CD4-positive, alpha-beta memory T cell (primary cell): ENCODE measurements at regions of chr1 and their contacts with region 1.

Region 1: GRCh38 chr1:98053471-98054366 is 132.9 kb upstream of the DPYD start:
- DNase-seq: peak; percentile 42 to 63 (median 50)
- H3K4me3 ChIP-seq: peak overlapping the region in 1 of 2 donors; percentile 49
- H3K4me3 Mint-ChIP-seq: peak overlapping the region; percentile 54 to 87 (median 72)
- H3K27ac ChIP-seq: no peak overlapping the region
- H3K27ac Mint-ChIP-seq: peak overlapping the region in 1 of 7 donors; percentile 71
- H3K4me1 ChIP-seq: peaks cover 22% of the 10 kb centered on the region
- H3K4me1 Mint-ChIP-seq: peaks cover 11 to 29% (median 22%) of the 10 kb centered on the region in 4 donors
- H3K27me3 ChIP-seq: peaks cover 40% of the 10 kb centered on the region
- H3K27me3 Mint-ChIP-seq: peaks cover 45 to 58% of the 10 kb centered on the region in 2 donors

Region 2: DNA sequence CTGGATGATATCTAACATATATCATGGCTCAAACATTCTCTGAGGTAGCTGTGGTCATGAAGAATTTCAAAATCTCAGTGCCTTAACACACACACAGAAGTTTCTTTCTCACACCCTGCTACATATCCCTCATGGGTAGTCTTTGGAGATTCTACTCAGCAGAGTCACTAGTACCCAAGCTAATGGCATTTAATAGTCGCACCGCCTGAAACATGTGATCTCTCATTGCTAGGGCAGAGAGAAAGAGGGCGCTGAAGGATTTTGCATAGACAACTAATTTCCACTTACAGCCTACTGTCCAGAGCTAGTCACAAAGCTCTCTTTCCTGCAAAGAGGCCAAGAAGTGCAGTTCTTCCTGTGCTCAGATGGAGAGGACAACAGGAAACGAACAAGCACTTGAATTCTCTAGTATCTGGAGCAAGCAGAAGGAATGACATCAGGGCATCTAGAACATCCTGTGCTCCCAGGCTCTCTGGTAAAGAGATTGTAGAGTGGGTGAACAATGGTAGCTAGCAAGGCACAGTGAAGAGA is 1515.5 kb before region 1 on chr1:
- CTCF ChIA-PET with region 1: no interaction called
- POLR2A ChIA-PET with region 1: no interaction called
- intact Hi-C with region 1: loop called (anchors 10 kb)
- DNase-seq: no peak
- H3K4me3 ChIP-seq: no peak overlapping the region
- H3K4me3 Mint-ChIP-seq: no peak overlapping the region
- H3K27ac ChIP-seq: no peak overlapping the region
- H3K27ac Mint-ChIP-seq: no peak overlapping the region
- H3K4me1 ChIP-seq: no peaks in the 10 kb centered on the region
- H3K4me1 Mint-ChIP-seq: no peaks in the 10 kb centered on the region
- H3K27me3 ChIP-seq: no peaks in the 10 kb centered on the region
- H3K27me3 Mint-ChIP-seq: peaks cover 0 to under 1% of the 10 kb centered on the region in 2 donors

Region 3: DNA sequence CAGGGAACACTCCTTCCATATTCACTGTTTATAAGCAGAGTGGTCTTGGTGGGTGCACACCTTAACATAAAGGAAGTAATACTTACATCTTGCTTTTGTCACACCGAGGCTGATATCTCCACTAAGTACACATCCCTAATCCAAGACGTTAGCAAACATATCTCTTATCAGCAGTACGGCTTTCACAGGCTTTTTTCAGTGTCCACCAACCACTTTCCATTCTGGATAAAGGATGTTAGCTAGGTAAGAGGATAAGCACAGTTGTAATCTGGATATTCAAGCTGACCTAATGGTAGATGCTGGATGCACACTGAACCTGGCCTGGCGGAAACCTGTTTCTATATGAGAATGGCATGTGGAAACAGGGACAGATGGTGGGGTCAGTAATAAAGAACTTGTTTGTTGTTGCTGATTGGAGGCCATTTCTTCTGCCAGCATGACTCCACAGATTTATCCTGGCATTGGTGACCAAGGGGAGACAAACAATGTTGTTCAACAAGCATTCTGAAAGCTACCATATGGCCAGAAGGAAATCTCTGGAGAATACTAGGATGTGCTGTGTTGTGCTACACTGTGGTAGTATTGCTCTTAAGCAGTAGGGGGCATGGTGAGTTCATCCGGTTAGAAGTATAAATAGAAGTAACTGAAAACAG is 915.7 kb before region 1 on chr1:
- CTCF ChIA-PET with region 1: interaction called, 10 read pairs
- POLR2A ChIA-PET with region 1: no interaction called
- intact Hi-C with region 1: loop called (anchors 1 kb)
- DNase-seq: peak in 1 of 5 donors; percentile 4
- H3K4me3 ChIP-seq: no peak overlapping the region
- H3K4me3 Mint-ChIP-seq: no peak overlapping the region
- H3K27ac ChIP-seq: no peak overlapping the region
- H3K27ac Mint-ChIP-seq: peak overlapping the region in 2 of 7 donors; percentile 16 to 34
- H3K4me1 ChIP-seq: no peaks in the 10 kb centered on the region
- H3K4me1 Mint-ChIP-seq: peaks cover 0 to 7% (median 5%) of the 10 kb centered on the region in 4 donors
- H3K27me3 ChIP-seq: no peaks in the 10 kb centered on the region
- H3K27me3 Mint-ChIP-seq: no peaks in the 10 kb centered on the region

Region 4: GRCh38 chr1:97243973-97244560 is 809.7 kb before region 1 on chr1:
- CTCF ChIA-PET with region 1: interaction called, 4 read pairs
- POLR2A ChIA-PET with region 1: no interaction called
- intact Hi-C with region 1: loop called (anchors 1 kb)
- DNase-seq: no peak
- H3K4me3 ChIP-seq: no peak overlapping the region
- H3K4me3 Mint-ChIP-seq: no peak overlapping the region
- H3K27ac ChIP-seq: no peak overlapping the region
- H3K27ac Mint-ChIP-seq: no peak overlapping the region
- H3K4me1 ChIP-seq: no peaks in the 10 kb centered on the region
- H3K4me1 Mint-ChIP-seq: peaks cover 0 to 2% (median 0%) of the 10 kb centered on the region in 4 donors
- H3K27me3 ChIP-seq: no peaks in the 10 kb centered on the region
- H3K27me3 Mint-ChIP-seq: no peaks in the 10 kb centered on the region

Region 5: DNA sequence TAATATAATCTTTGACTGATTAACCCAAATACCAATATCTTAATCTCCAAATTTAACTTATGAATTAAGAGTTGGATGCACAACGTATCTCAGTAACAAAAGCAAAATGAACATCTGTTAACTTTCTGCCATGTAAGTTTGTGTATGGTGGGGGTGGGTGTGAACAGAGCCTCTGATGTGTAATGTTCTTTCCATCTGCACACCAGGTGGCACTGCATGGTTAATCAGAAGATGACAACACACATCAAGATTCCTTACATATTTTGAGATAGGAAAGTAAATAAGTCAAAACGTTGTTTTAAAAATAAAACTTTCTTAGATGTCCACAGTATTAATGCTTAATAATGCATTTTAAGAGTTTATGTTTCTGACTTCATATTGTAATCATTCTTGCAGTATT is 384.8 kb before region 1 on chr1:
- CTCF ChIA-PET with region 1: interaction called, 5 read pairs
- POLR2A ChIA-PET with region 1: no interaction called
- intact Hi-C with region 1: loop called (anchors 1 kb)
- DNase-seq: no peak
- H3K4me3 ChIP-seq: no peak overlapping the region
- H3K4me3 Mint-ChIP-seq: no peak overlapping the region
- H3K27ac ChIP-seq: no peak overlapping the region
- H3K27ac Mint-ChIP-seq: no peak overlapping the region
- H3K4me1 ChIP-seq: no peaks in the 10 kb centered on the region
- H3K4me1 Mint-ChIP-seq: no peaks in the 10 kb centered on the region
- H3K27me3 ChIP-seq: no peaks in the 10 kb centered on the region
- H3K27me3 Mint-ChIP-seq: no peaks in the 10 kb centered on the region

Region 6: GRCh38 chr1:97906567-97907241 is 147.0 kb before region 1 on chr1:
- CTCF ChIA-PET with region 1: no interaction called
- POLR2A ChIA-PET with region 1: no interaction called
- intact Hi-C with region 1: no loop called
- DNase-seq: no peak
- H3K4me3 ChIP-seq: no peak overlapping the region
- H3K4me3 Mint-ChIP-seq: no peak overlapping the region
- H3K27ac ChIP-seq: no peak overlapping the region
- H3K27ac Mint-ChIP-seq: no peak overlapping the region
- H3K4me1 ChIP-seq: peaks cover 15% of the 10 kb centered on the region
- H3K4me1 Mint-ChIP-seq: peaks cover 24 to 40% (median 32%) of the 10 kb centered on the region in 4 donors
- H3K27me3 ChIP-seq: no peaks in the 10 kb centered on the region
- H3K27me3 Mint-ChIP-seq: no peaks in the 10 kb centered on the region

Region 7: GRCh38 chr1:97986041-97987005 is 67.4 kb before region 1 on chr1:
- CTCF ChIA-PET with region 1: no interaction called
- POLR2A ChIA-PET with region 1: no interaction called
- intact Hi-C with region 1: no loop called
- DNase-seq: peak; percentile 1 to 40 (median 15)
- H3K4me3 ChIP-seq: no peak overlapping the region
- H3K4me3 Mint-ChIP-seq: peak overlapping the region in 7 of 8 donors; percentile 15 to 82 (median 67)
- H3K27ac ChIP-seq: no peak overlapping the region
- H3K27ac Mint-ChIP-seq: peak overlapping the region in 2 of 7 donors; percentile 4 to 85
- H3K4me1 ChIP-seq: no peaks in the 10 kb centered on the region
- H3K4me1 Mint-ChIP-seq: peaks cover 0 to 2% (median under 1%) of the 10 kb centered on the region in 4 donors
- H3K27me3 ChIP-seq: no peaks in the 10 kb centered on the region
- H3K27me3 Mint-ChIP-seq: peaks cover 1 to 5% of the 10 kb centered on the region in 2 donors

Region 8: GRCh38 chr1:98104289-98104688 is 50.6 kb after region 1 on chr1:
- CTCF ChIA-PET with region 1: no interaction called
- POLR2A ChIA-PET with region 1: no interaction called
- intact Hi-C with region 1: no loop called
- DNase-seq: no peak
- H3K4me3 ChIP-seq: no peak overlapping the region
- H3K4me3 Mint-ChIP-seq: no peak overlapping the region
- H3K27ac ChIP-seq: no peak overlapping the region
- H3K27ac Mint-ChIP-seq: no peak overlapping the region
- H3K4me1 ChIP-seq: no peaks in the 10 kb centered on the region
- H3K4me1 Mint-ChIP-seq: no peaks in the 10 kb centered on the region
- H3K27me3 ChIP-seq: no peaks in the 10 kb centered on the region
- H3K27me3 Mint-ChIP-seq: peaks cover 0 to 2% of the 10 kb centered on the region in 2 donors

Region 9: GRCh38 chr1:98468111-98468717 is 414.5 kb after region 1 on chr1:
- CTCF ChIA-PET with region 1: interaction called, 14 read pairs
- POLR2A ChIA-PET with region 1: no interaction called
- intact Hi-C with region 1: no loop called
- DNase-seq: peak in 4 of 5 donors; percentile 2 to 20 (median 14)
- H3K4me3 ChIP-seq: no peak overlapping the region
- H3K4me3 Mint-ChIP-seq: no peak overlapping the region
- H3K27ac ChIP-seq: no peak overlapping the region
- H3K27ac Mint-ChIP-seq: no peak overlapping the region
- H3K4me1 ChIP-seq: no peaks in the 10 kb centered on the region
- H3K4me1 Mint-ChIP-seq: peaks cover 0 to 3% (median 0%) of the 10 kb centered on the region in 4 donors
- H3K27me3 ChIP-seq: no peaks in the 10 kb centered on the region
- H3K27me3 Mint-ChIP-seq: peaks cover 0 to 2% of the 10 kb centered on the region in 2 donors

Region 10: DNA sequence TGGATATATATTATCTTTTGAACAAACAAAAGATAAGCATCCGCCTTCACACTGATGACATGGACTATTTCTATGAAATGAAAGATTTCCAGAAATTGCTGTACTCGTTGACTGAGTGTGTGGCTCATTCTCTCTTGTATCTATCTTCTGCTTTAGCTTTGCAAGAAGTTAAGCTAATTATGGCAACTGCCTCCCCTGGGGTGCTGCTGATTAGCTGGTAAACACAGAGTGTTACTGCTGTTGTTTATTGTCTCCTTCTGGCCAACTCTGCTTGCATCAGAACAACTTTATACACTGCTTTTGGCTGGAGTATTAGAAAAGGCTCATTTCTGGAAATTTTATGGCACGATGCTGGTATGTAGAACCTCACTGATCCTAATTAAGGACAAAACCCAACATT is 512.2 kb after region 1 on chr1:
- CTCF ChIA-PET with region 1: no interaction called
- POLR2A ChIA-PET with region 1: no interaction called
- intact Hi-C with region 1: no loop called
- DNase-seq: no peak
- H3K4me3 ChIP-seq: no peak overlapping the region
- H3K4me3 Mint-ChIP-seq: no peak overlapping the region
- H3K27ac ChIP-seq: no peak overlapping the region
- H3K27ac Mint-ChIP-seq: no peak overlapping the region
- H3K4me1 ChIP-seq: no peaks in the 10 kb centered on the region
- H3K4me1 Mint-ChIP-seq: no peaks in the 10 kb centered on the region
- H3K27me3 ChIP-seq: no peaks in the 10 kb centered on the region
- H3K27me3 Mint-ChIP-seq: peaks cover 0 to 4% of the 10 kb centered on the region in 2 donors